Caco-2 (cell line): ENCODE measurements at regions of chr3 and their contacts with region 1.

Region 1: DNA sequence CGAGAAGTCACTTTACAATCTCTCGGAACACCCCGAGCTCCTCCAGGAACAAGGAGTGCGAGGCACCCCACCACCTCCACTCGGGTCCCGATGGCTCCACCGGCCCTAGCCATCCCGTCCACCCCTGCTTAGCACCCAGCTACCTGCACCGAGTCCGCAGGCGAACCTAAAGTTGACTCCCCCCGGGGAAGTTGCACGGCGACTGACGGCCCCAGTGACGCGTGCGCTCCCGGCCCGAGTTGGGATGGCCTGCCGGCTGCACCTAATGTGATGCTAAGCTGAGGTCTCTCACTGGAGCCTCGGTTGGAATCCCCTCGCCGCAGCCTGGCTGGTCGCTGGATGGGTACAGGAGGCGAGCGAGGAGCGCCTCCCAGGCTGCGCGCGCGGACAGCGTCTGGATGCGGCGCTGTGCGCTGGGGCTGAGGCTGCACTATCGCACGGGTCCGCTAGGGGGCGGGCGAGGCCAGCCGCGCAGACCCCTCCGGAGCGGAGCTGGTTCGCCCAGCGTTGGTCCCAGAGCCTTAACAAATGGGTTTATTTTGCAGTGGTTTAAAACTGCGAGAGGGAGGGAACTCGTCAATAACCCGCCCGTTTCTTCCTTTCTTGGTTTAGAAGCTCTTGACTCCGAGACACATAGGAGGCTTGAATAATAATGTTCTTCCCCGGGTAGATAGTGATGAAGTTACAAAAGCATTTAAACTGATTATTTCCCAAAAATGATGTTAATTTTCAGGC is at the start of gene OXTR:
- DNase-seq: peak; percentile 59 to 87
- H3K4me3 ChIP-seq: peak within 1 kb of the TSS; percentile 44
- H3K4me3 Mint-ChIP-seq: peak within 1 kb of the TSS; percentile 71
- H3K27ac Mint-ChIP-seq: no peak within 1 kb of the TSS
- H3K4me1 ChIP-seq: peaks cover 9% of the 10 kb centered on the region; the same call in 1 of the 2 replicates
- H3K4me1 Mint-ChIP-seq: peaks cover 6% of the 10 kb centered on the region
- H3K27me3 ChIP-seq: no peaks in the 10 kb centered on the region; the same call in 1 of the 2 replicates
- H3K27me3 Mint-ChIP-seq: peaks cover 8% of the 10 kb centered on the region
- CTCF ChIP-seq: peak; percentile 95 to 96
- total RNA-seq, gene OXTR: 3.9 and 4.6 TPM in 2 replicates

Region 2: GRCh38 chr3:8629151-8630021 is 139.9 kb before region 1 on chr3:
- CTCF ChIA-PET with region 1: no interaction called
- POLR2A ChIA-PET with region 1: no interaction called
- intact Hi-C with region 1: loop called (anchors 2 kb)
- DNase-seq: peak; percentile 21 to 70
- H3K4me3 ChIP-seq: no peak overlapping the region
- H3K4me3 Mint-ChIP-seq: no peak overlapping the region
- H3K27ac Mint-ChIP-seq: no peak overlapping the region
- H3K4me1 ChIP-seq: peaks cover 27% of the 10 kb centered on the region
- H3K4me1 Mint-ChIP-seq: no peaks in the 10 kb centered on the region
- H3K27me3 ChIP-seq: no peaks in the 10 kb centered on the region
- H3K27me3 Mint-ChIP-seq: no peaks in the 10 kb centered on the region
- CTCF ChIP-seq: no peak

Region 3: DNA sequence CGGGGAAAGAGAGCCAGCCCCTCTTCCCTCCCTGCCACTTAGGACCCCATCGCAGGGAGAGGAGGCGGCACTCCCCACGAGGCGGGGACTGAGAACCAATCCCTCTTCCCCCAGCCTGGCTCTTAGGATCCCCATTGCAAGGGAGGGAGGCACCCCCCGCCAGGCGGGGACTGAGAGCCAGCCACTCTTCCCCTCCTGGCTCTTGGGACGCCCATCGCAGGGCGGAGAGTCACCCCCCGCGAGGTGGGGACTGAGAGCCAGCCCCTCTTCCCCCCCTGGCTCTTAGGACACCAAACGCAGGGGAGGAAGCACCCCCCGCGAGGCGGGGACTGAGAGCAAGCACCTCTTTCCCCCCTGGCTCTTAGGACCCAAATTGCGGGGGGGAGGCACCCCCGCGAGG is 90.5 kb before region 1 on chr3:
- CTCF ChIA-PET with region 1: no interaction called
- POLR2A ChIA-PET with region 1: no interaction called
- intact Hi-C with region 1: loop called (anchors 5 kb)
- DNase-seq: no peak
- H3K4me3 ChIP-seq: no peak overlapping the region
- H3K4me3 Mint-ChIP-seq: no peak overlapping the region
- H3K27ac Mint-ChIP-seq: no peak overlapping the region
- H3K4me1 ChIP-seq: peaks cover 6% of the 10 kb centered on the region
- H3K4me1 Mint-ChIP-seq: peaks cover 7% of the 10 kb centered on the region
- H3K27me3 ChIP-seq: no peaks in the 10 kb centered on the region
- H3K27me3 Mint-ChIP-seq: no peaks in the 10 kb centered on the region
- CTCF ChIP-seq: no peak

Region 4: DNA sequence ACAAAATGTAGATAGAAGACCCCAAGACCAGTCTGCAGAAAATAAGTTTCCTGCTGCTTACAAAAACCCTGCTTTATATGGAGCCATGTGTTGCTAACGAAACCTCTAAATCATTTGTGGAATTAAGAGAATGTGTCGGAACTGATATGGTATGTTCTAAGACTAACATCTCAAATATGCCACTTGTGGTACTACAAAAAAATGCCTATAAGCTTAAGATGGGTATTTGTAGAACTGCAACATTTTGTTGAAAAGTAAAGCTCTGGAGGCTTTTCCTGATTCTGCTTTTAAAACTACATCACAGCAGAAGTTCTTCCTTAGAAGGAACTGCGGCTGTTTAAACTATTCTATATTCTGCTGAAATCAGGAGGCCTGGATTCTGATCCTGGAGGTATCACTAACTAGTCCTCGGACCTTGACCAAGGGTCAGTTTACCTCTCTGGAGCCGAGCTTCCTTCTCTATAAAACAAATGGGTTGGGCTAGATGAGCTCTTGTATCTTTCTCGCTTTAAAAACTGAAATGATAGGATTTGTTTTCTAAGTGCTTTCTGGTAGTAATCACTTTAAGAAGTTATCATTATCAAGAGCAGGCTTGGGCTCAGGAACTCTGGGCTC is 119.2 kb after region 1 on chr3:
- CTCF ChIA-PET with region 1: interaction called, 3 read pairs
- POLR2A ChIA-PET with region 1: no interaction called
- intact Hi-C with region 1: loop called (anchors 5 kb)
- DNase-seq: no peak
- H3K4me3 ChIP-seq: no peak overlapping the region
- H3K4me3 Mint-ChIP-seq: no peak overlapping the region
- H3K27ac Mint-ChIP-seq: no peak overlapping the region
- H3K4me1 ChIP-seq: peaks cover 16% of the 10 kb centered on the region
- H3K4me1 Mint-ChIP-seq: peaks cover 18% of the 10 kb centered on the region
- H3K27me3 ChIP-seq: no peaks in the 10 kb centered on the region
- H3K27me3 Mint-ChIP-seq: no peaks in the 10 kb centered on the region
- CTCF ChIP-seq: no peak

Region 5: DNA sequence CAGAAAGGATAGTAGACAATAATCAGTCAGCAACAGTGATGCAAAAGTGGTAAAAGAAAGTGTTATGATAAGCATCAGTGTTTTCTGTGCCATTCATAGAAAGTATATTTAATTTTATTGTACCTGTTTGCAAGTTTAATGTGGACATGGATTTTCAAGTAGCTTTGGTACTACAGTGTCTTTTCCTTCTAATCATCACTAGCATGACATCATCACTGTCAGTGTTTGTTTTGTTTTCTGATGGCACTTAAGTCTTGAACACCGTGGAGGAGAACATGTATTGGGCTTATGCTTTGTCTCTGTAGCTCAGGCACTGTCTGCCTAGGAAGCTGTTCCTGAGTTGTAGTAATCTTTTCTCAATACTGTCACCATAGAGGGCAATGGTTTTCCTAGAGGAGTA is 670.1 kb after region 1 on chr3:
- CTCF ChIA-PET with region 1: no interaction called
- POLR2A ChIA-PET with region 1: no interaction called
- intact Hi-C with region 1: no loop called
- DNase-seq: no peak
- H3K4me3 ChIP-seq: no peak overlapping the region
- H3K4me3 Mint-ChIP-seq: no peak overlapping the region
- H3K27ac Mint-ChIP-seq: no peak overlapping the region
- H3K4me1 ChIP-seq: 0 out of 2 replicates have a peak, but pooled peaks cover 3% of the 10 kb centered on the region
- H3K4me1 Mint-ChIP-seq: peaks cover 6% of the 10 kb centered on the region
- H3K27me3 ChIP-seq: no peaks in the 10 kb centered on the region
- H3K27me3 Mint-ChIP-seq: no peaks in the 10 kb centered on the region
- CTCF ChIP-seq: no peak